ENCODE measurements at regions of chr11 and their contacts with region 1.

Region 1: GRCh38 chr11:90453525-90453924 is 230.7 kb upstream of the CHORDC1 start:
- DNase-seq: no peak
- ATAC-seq: no peak
- H3K4me3 Mint-ChIP-seq: no peak overlapping the region
- H3K27ac Mint-ChIP-seq: no peak overlapping the region
- H3K4me1 Mint-ChIP-seq: no peaks in the 10 kb centered on the region
- H3K27me3 Mint-ChIP-seq: peaks cover 3% of the 10 kb centered on the region

Region 2: GRCh38 chr11:90250970-90251369 is 202.6 kb before region 1 on chr11:
- CTCF ChIA-PET with region 1: no interaction called
- POLR2A ChIA-PET with region 1: no interaction called
- intact Hi-C with region 1: loop called in 1 of 2 experiments (anchors 2 kb)
- DNase-seq: peak; percentile 29
- ATAC-seq: peak; percentile 77
- H3K4me3 Mint-ChIP-seq: peak overlapping the region; percentile 64
- H3K27ac Mint-ChIP-seq: peak overlapping the region; percentile 2
- H3K4me1 Mint-ChIP-seq: peaks cover 14% of the 10 kb centered on the region
- H3K27me3 Mint-ChIP-seq: peaks cover 2% of the 10 kb centered on the region

Region 3: GRCh38 chr11:90288212-90288821 is 165.2 kb before region 1 on chr11:
- CTCF ChIA-PET with region 1: no interaction called
- POLR2A ChIA-PET with region 1: no interaction called
- intact Hi-C with region 1: loop called (anchors 2 kb)
- DNase-seq: no peak
- ATAC-seq: no peak
- H3K4me3 Mint-ChIP-seq: no peak overlapping the region
- H3K27ac Mint-ChIP-seq: no peak overlapping the region
- H3K4me1 Mint-ChIP-seq: no peaks in the 10 kb centered on the region
- H3K27me3 Mint-ChIP-seq: peaks cover 2% of the 10 kb centered on the region

Measured in activated CD4-positive, alpha-beta T cell treated with anti-CD3 and anti-CD28 coated beads for 36 hours (primary cell).